ENCODE measurements at regions of chr11 and their contacts with region 1.

Region 1: DNA sequence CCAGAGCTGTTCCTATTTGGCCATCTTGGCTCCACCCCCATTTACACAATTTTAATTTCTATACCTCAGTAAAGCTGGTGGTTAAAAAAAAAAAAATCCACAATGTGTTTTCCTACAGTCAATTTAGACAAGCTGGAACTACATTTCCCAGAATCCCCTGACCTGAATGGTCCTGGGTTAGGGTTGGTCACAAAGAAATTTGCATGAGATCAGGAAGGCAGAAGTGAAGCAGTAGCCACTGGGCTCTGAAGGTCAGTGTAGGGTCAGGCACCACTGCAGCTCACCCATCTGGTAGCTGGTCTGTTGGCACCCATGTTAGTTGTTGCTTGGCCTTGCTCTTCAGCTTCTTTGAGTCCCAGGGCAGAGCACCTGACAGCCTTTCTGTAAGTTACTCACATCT is 210.7 kb upstream of the API5 start:
- DNase-seq: no peak
- ATAC-seq: no peak
- H3K4me3 ChIP-seq: no peak overlapping the region
- H3K27ac ChIP-seq: no peak overlapping the region
- H3K4me1 ChIP-seq: no peaks in the 10 kb centered on the region
- H3K27me3 ChIP-seq: no peaks in the 10 kb centered on the region
- CTCF ChIP-seq: no peak
- POLR2A ChIP-seq: no peak
- RAD21 ChIP-seq: no peak

Region 2: DNA sequence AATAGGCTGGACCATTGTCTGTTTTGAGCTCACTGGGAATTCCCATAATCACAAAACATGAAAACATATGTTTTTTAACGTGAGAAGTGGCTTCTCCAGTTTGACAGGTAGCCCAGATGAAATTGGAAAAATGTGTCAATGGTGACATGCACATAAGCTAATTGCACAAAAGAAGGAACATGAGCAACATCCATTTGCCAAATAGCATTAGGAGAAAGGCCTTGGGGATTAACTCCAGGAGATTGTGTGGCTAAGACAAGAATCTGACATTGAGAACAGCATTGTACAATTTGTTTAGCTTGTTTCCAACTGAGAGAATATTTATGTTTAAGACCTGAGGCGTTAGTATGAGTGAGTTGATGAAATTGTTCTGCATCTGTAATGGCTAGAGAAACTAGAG is 63.7 kb after region 1 on chr11:
- CTCF ChIA-PET with region 1: no interaction called
- POLR2A ChIA-PET with region 1: no interaction called
- dilution Hi-C with region 1: no loop called
- in situ Hi-C with region 1: loop called (anchors 10 kb)
- intact Hi-C with region 1: no loop called
- DNase-seq: no peak
- ATAC-seq: no peak
- H3K4me3 ChIP-seq: no peak overlapping the region
- H3K27ac ChIP-seq: no peak overlapping the region
- H3K4me1 ChIP-seq: no peaks in the 10 kb centered on the region
- H3K27me3 ChIP-seq: no peaks in the 10 kb centered on the region
- CTCF ChIP-seq: no peak
- POLR2A ChIP-seq: no peak
- RAD21 ChIP-seq: no peak

Region 3: GRCh38 chr11:44016131-44016530 is 915.0 kb after region 1 on chr11:
- CTCF ChIA-PET with region 1: no interaction called
- POLR2A ChIA-PET with region 1: no interaction called
- dilution Hi-C with region 1: no loop called
- in situ Hi-C with region 1: no loop called
- intact Hi-C with region 1: no loop called
- DNase-seq: peak; percentile 67
- ATAC-seq: peak; percentile 79
- H3K4me3 ChIP-seq: no peak overlapping the region
- H3K27ac ChIP-seq: no peak overlapping the region
- H3K4me1 ChIP-seq: peaks cover 9% of the 10 kb centered on the region
- H3K27me3 ChIP-seq: no peaks in the 10 kb centered on the region
- CTCF ChIP-seq: no peak
- POLR2A ChIP-seq: no peak
- RAD21 ChIP-seq: no peak